ENCODE measurements at regions of chr1 and their contacts with region 1.

Region 1: GRCh38 chr1:181397845-181398244 is 85.5 kb upstream of the CACNA1E start:
- DNase-seq: peak; percentile 23
- H3K4me3 Mint-ChIP-seq: no peak overlapping the region
- H3K27ac Mint-ChIP-seq: no peak overlapping the region
- H3K4me1 Mint-ChIP-seq: peaks cover 39% of the 10 kb centered on the region
- H3K27me3 Mint-ChIP-seq: no peaks in the 10 kb centered on the region

Region 2: DNA sequence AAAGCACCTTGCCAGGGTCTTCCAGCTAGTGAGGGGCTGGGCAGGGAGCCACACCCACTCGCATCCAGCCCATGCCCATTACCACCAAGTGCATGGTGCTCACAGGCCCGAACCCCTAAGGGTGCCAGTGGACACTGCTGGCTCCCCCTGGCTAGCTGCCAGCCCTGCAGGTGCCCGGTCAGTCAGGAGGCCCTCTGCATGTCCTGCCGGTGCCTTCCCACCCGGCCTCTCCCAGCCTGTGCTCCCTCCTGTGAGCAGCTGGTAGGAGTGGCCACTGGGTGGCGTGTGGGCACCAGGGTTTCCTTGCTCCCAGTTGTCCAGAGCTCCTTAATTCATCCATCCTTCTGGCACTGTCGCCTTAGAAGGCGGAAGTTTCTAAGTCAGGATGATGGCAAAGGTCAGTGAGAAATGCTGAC is 1209.7 kb before region 1 on chr1:
- CTCF ChIA-PET with region 1: no interaction called
- intact Hi-C with region 1: no loop called
- DNase-seq: peak; percentile 51
- H3K4me3 Mint-ChIP-seq: no peak overlapping the region
- H3K27ac Mint-ChIP-seq: no peak overlapping the region
- H3K4me1 Mint-ChIP-seq: no peaks in the 10 kb centered on the region
- H3K27me3 Mint-ChIP-seq: no peaks in the 10 kb centered on the region

Region 3: DNA sequence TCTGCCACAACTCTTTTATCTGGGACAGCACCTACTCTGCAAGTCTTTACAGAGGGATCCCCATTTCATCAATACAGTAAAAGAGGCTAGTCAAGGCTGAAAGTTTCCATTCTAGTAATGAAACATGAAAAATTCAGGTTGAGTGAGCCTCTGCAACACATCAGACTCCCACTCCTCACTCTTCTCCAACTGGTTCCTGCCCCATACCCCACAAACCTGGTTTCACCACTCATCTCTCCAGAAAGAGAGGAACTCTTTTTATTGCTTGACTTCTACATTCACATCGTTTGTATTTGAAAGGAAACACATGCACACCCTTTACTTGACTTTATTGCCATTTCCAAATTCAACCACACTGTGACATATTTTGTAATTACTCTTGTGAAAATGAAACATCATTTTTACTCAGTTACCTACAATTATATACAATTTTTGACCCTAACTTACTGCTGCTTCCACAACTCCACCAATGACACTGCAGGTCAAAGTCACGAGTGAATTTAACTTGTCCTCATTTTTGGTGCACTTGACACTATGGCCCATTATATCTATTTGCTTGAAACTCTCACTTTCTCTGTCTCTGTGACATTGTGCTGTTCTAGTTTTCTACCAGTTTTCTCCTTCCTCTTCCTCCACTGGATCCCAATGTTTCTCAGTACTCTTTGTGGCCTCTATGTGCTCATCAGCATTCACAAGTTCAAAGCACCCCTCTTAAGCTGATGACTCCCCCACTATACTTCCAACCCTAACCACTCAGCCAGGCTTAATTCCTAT is 383.2 kb before region 1 on chr1:
- CTCF ChIA-PET with region 1: no interaction called
- intact Hi-C with region 1: loop called (anchors 1 kb)
- DNase-seq: peak; percentile 33
- H3K4me3 Mint-ChIP-seq: no peak overlapping the region
- H3K27ac Mint-ChIP-seq: no peak overlapping the region
- H3K4me1 Mint-ChIP-seq: peaks cover 43% of the 10 kb centered on the region
- H3K27me3 Mint-ChIP-seq: no peaks in the 10 kb centered on the region

Region 4: DNA sequence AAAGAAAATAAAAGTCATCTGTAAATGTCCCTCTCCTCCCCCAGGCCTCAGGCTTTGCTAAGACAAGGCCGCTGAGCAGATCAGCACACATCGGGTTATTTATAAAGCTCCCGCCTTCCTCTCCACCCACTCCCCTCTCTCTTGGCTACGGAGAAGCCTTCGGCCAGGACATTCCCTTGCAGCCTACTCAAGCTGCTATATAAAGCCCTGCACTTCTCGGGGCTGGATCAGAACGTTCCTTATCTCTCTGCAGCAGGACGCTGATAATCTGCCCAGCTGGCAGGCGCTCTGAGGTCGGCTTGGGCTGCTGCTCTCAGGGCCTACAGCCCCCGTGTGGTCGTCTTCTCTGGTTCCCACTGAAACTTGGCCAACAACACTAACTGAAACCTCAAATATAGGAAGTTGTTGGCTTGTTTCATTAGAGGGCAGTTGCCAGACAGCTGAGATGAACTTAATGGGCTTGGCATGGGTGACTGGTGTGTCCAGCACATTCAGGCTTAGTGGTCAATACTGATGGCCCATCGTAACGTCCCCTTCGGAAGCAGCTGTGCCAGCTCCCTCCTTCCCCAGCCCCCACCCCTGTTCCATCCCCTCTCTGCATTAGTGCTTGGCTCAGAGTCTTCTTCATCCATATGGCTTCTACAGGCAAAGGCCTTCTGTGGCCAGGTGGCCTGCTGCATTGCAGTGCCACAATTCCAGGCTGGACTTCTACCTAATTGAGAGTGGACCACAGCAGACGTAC is 244.8 kb before region 1 on chr1:
- CTCF ChIA-PET with region 1: no interaction called
- intact Hi-C with region 1: loop called (anchors 2 kb)
- DNase-seq: no peak
- H3K4me3 Mint-ChIP-seq: no peak overlapping the region
- H3K27ac Mint-ChIP-seq: no peak overlapping the region
- H3K4me1 Mint-ChIP-seq: peaks cover 37% of the 10 kb centered on the region
- H3K27me3 Mint-ChIP-seq: no peaks in the 10 kb centered on the region

Region 5: DNA sequence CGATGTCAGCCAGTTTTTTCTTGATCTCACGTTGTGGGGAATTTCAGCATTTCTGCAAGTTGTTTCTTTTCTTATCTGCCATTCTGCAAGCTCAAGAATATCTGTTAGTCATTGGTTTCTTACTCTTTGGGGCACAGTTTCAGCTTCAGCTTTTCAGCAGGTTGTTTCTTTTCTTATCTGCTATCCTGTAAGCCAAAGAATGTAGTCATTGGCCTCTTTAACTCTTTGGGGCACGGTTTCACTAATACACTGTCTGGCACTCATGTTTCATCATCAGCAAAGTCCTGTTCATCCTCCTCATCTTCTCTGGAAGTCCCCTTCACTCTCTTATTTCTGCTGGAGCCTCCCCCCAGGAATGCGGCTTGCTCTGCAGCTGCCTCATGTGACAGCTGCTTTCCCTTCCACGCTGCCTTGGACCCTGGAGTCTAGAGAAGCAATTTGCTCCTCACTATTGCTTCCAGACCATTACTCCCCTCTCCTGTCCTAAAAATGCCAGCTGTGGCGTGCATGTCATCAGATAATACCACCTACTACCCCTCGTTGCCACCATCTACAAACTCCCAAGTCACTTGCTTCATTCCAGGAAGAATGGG is 18.5 kb after region 1 on chr1:
- CTCF ChIA-PET with region 1: interaction called, 8 read pairs
- intact Hi-C with region 1: loop called (anchors 1 kb)
- DNase-seq: no peak
- H3K4me3 Mint-ChIP-seq: no peak overlapping the region
- H3K27ac Mint-ChIP-seq: no peak overlapping the region
- H3K4me1 Mint-ChIP-seq: no peaks in the 10 kb centered on the region
- H3K27me3 Mint-ChIP-seq: no peaks in the 10 kb centered on the region

Region 6: GRCh38 chr1:182249201-182249676 is 851.4 kb after region 1 on chr1:
- CTCF ChIA-PET with region 1: no interaction called
- intact Hi-C with region 1: loop called (anchors 1 kb)
- DNase-seq: peak; percentile 83
- H3K4me3 Mint-ChIP-seq: no peak overlapping the region
- H3K27ac Mint-ChIP-seq: peak overlapping the region; percentile 75
- H3K4me1 Mint-ChIP-seq: peaks cover 24% of the 10 kb centered on the region
- H3K27me3 Mint-ChIP-seq: no peaks in the 10 kb centered on the region